BJ (cell line): ENCODE measurements at regions of chr2 and their contacts with region 1.

Region 1: DNA sequence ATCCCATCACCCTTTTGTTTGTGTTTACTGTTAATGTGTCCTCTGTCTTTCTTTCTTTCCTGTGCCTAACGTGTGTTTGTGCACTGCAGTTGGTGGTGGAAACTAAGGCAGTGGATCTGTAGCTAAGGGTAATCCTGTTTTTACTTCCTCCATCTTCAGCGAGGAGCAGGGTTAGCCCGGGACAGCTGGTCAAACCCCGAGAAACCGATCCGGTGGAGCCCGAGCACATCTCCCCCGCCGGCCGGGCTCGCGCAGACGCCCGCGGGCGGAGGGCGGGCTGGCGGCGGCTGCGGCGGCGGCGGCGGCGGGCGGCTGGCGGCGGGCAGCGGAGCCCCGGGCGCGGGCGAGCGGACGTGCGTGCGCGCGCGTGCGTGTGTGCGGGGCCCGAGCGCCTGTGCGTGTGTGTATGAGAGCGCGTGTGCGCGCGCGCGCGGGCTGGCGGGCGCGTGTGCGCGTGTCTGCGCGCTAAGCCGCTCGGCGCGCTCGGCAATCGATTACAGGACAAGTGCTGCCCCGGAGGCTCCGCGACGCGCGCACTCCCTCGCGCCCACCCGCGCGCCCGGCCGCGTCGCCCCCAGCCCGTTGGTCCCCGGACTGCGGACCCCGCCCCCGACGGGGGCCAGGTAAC is at the start of gene IKZF2:
- DNase-seq: peak; percentile 53
- H3K4me3 ChIP-seq: peak within 1 kb of the TSS; percentile 89
- H3K27me3 ChIP-seq: no peaks in the 10 kb centered on the region
- CTCF ChIP-seq: no peak
- polyA plus RNA-seq, gene IKZF2: 2.4 and 2.9 TPM in 2 replicates

Region 2: DNA sequence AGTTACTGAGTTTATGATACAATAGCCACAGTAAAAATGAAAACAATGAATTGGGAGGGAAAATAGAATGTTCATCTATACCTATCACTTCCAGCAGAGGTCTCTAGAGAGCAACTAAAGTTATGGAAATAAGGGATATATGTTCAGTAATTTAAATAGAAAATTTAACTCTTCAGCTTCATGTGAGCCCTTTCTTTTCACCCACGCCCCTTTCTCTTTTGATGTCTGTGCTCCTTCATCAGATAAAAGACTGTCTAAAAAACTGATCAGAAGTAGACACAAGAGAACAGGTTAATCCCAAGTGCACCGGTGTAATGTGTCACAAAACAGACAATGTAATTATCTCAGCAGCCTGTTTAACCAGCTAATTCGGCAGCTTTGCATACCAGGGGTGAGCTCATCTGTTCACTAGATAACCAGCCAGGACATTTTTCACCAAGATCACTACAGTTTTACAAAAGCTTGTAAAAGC is 374.5 kb before region 1 on chr2:
- CTCF ChIA-PET with region 1: interaction called, 69 read pairs
- POLR2A ChIA-PET with region 1: interaction called, 3 read pairs
- DNase-seq: no peak
- H3K4me3 ChIP-seq: no peak overlapping the region
- H3K27me3 ChIP-seq: no peaks in the 10 kb centered on the region
- CTCF ChIP-seq: peak; percentile 53

Region 3: GRCh38 chr2:212919250-212919649 is 232.3 kb before region 1 on chr2:
- CTCF ChIA-PET with region 1: interaction called, 3 read pairs
- POLR2A ChIA-PET with region 1: interaction called, 14 read pairs
- DNase-seq: no peak
- H3K4me3 ChIP-seq: no peak overlapping the region
- H3K27me3 ChIP-seq: no peaks in the 10 kb centered on the region
- CTCF ChIP-seq: no peak

Region 4: DNA sequence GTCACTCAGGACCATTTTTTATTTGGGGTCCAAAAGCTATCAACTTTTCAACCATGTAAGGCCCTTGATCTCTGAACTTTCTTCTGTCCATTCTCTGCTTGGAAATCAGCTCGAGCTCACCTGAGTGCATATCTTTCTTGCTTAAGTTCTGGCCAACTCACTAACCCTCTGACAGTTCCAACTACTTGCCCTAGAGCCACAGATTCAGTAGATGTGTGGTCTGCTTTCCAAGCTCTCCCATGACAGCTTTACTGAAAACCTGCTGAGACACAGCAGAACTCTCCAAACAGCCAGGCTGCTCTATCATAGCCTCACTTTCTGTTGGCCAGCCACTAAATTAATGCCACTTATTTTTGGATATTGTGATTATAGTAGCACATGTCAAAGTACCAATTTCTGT is 21.1 kb after region 1 on chr2:
- CTCF ChIA-PET with region 1: interaction called, 14 read pairs
- POLR2A ChIA-PET with region 1: no interaction called
- DNase-seq: no peak
- H3K4me3 ChIP-seq: no peak overlapping the region
- H3K27me3 ChIP-seq: no peaks in the 10 kb centered on the region
- CTCF ChIP-seq: no peak

Region 5: GRCh38 chr2:213420828-213421385 is 269.4 kb after region 1 on chr2:
- CTCF ChIA-PET with region 1: no interaction called
- POLR2A ChIA-PET with region 1: no interaction called
- DNase-seq: no peak
- H3K4me3 ChIP-seq: no peak overlapping the region
- H3K27me3 ChIP-seq: no peaks in the 10 kb centered on the region
- CTCF ChIP-seq: no peak